ENCODE measurements at regions of chr19 and their contacts with region 1.

Region 1: GRCh38 chr19:50321831-50322230 is 7.3 kb downstream of the KCNC3 start:
- DNase-seq: no peak
- ATAC-seq: no peak
- H3K4me3 ChIP-seq: no peak overlapping the region
- H3K4me3 Mint-ChIP-seq: no peak overlapping the region
- H3K27ac ChIP-seq: no peak overlapping the region
- H3K27ac Mint-ChIP-seq: no peak overlapping the region
- H3K4me1 ChIP-seq: peaks cover 12 to 16% of the 10 kb centered on the region in 2 donors
- H3K4me1 Mint-ChIP-seq: peaks cover 19% of the 10 kb centered on the region
- H3K27me3 ChIP-seq: peaks cover 0 to 2% (median 0%) of the 10 kb centered on the region in 4 experiments
- H3K27me3 Mint-ChIP-seq: peaks cover 3% of the 10 kb centered on the region
- CTCF ChIP-seq: no peak

Region 2: DNA sequence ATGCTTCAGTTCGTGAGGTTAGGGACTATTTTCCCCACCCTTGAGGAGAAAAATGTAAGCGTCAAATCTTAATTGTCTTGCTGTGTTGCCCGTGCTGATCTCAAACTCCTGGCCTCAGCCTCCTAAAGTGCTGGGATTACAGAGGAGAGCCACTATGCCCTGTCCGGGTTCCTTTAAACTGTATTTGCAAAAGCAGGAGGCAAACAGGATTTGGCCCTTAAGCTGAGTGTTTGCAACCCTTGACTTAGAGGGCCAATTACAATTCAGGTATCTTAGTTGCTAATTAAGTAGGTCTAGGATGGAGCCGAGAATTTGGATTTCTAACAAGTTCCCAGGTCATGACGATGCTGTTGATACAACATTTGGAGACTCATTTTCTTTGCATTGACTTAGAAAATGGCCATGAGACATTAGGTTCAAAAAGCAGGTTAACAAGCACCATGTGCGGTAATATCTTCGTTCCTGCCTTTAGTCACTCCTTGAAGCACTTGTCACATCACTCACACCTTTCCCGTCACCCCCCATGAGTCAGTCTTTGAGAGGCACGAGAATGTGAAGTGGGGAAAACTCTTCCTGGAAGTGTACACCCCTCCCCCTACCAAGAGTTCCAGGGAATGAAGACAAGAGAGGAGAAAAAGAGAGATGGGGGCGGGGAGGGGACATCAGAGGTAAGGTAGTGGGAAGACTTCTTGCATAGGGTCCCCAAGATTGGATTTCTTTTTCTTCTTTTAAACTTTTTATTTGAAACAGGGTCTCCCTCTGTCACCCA is 41.0 kb after region 1 on chr19:
- CTCF ChIA-PET with region 1: interaction called, 6 read pairs
- POLR2A ChIA-PET with region 1: interaction called, 11 read pairs
- intact Hi-C with region 1: no loop called
- DNase-seq: no peak
- ATAC-seq: no peak
- H3K4me3 ChIP-seq: no peak overlapping the region
- H3K4me3 Mint-ChIP-seq: no peak overlapping the region
- H3K27ac ChIP-seq: no peak overlapping the region
- H3K27ac Mint-ChIP-seq: peak overlapping the region; percentile 32
- H3K4me1 ChIP-seq: peaks cover 28 to 61% of the 10 kb centered on the region in 2 donors
- H3K4me1 Mint-ChIP-seq: peaks cover 56% of the 10 kb centered on the region
- H3K27me3 ChIP-seq: no peaks in the 10 kb centered on the region
- H3K27me3 Mint-ChIP-seq: no peaks in the 10 kb centered on the region
- CTCF ChIP-seq: no peak

Region 3: GRCh38 chr19:51158474-51159129 is 836.8 kb after region 1 on chr19:
- CTCF ChIA-PET with region 1: no interaction called
- POLR2A ChIA-PET with region 1: no interaction called
- intact Hi-C with region 1: no loop called
- DNase-seq: peak; percentile 52
- ATAC-seq: no peak
- H3K4me3 ChIP-seq: no peak overlapping the region
- H3K4me3 Mint-ChIP-seq: no peak overlapping the region
- H3K27ac ChIP-seq: no peak overlapping the region
- H3K27ac Mint-ChIP-seq: no peak overlapping the region
- H3K4me1 ChIP-seq: no peaks in the 10 kb centered on the region
- H3K4me1 Mint-ChIP-seq: no peaks in the 10 kb centered on the region
- H3K27me3 ChIP-seq: peaks cover 0 to 27% (median 4%) of the 10 kb centered on the region in 4 experiments
- H3K27me3 Mint-ChIP-seq: peaks cover 39% of the 10 kb centered on the region
- CTCF ChIP-seq: peak; percentile 73

Measured in B cell (primary cell).